ENCODE measurements at regions of chr16 and their contacts with region 1.

Region 1: GRCh38 chr16:83826146-83826913 is 18.6 kb downstream of the HSBP1 start:
- DNase-seq: peak; percentile 47
- H3K4me3 ChIP-seq: no peak overlapping the region
- H3K27me3 ChIP-seq: peaks cover 3% of the 10 kb centered on the region
- CTCF ChIP-seq: peak; percentile 93

Region 2: DNA sequence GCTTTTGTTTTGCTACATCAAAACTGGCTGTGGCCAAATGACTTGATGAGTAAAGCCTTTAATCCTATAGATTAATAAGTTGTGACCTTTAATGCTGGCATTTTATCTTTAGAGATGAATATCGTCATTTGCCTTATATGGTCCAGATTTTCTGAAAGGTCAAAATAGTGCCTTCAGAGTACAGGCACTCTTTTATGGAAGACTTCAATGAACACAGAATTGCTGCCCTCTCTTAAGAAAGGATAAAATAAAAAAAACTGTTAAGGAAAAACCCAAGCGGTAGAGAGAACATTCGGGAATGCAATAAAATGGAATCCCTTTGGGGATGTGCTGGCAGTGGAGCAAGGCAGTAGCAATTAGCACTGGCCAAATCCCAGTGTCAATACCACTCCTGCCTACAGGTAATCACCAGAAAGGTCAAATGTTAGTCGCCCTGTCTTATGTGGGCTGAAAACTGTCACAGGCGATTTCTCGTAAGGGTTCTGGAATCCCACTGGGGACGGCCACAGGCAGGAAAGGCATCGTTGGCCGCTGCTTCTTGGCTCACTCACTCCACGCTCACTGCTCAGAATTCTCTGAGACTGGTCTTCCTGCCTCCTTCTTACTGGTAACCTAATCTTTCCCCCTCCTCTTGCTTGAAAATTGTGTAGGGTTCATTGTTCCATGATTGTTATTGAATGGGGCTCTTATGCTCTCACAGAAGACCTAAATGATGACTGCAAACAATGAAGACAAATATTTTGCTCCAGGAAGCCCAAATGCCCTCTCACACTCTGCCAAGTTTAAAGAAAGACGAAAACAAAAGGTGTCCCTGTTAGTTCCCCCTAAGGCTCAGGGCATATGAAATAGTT is 64.0 kb before region 1 on chr16:
- CTCF ChIA-PET with region 1: no interaction called
- POLR2A ChIA-PET with region 1: no interaction called
- DNase-seq: no peak
- H3K4me3 ChIP-seq: no peak overlapping the region
- H3K27me3 ChIP-seq: no peaks in the 10 kb centered on the region
- CTCF ChIP-seq: no peak

Region 3: GRCh38 chr16:83878838-83879237 is 52.5 kb after region 1 on chr16:
- CTCF ChIA-PET with region 1: interaction called, 25 read pairs
- POLR2A ChIA-PET with region 1: no interaction called
- DNase-seq: no peak
- H3K4me3 ChIP-seq: no peak overlapping the region
- H3K27me3 ChIP-seq: peaks cover 9% of the 10 kb centered on the region
- CTCF ChIP-seq: peak; percentile 65

Region 4: GRCh38 chr16:83887081-83887480 is 60.8 kb after region 1 on chr16:
- CTCF ChIA-PET with region 1: interaction called, 25 read pairs
- POLR2A ChIA-PET with region 1: no interaction called
- DNase-seq: no peak
- H3K4me3 ChIP-seq: no peak overlapping the region
- H3K27me3 ChIP-seq: peaks cover 3% of the 10 kb centered on the region
- CTCF ChIP-seq: peak; percentile 48

Measured in BJ (cell line).